Aorta (tissue), 5 donors: ENCODE measurements at regions of chr1 and their contacts with region 1.

Region 1: DNA sequence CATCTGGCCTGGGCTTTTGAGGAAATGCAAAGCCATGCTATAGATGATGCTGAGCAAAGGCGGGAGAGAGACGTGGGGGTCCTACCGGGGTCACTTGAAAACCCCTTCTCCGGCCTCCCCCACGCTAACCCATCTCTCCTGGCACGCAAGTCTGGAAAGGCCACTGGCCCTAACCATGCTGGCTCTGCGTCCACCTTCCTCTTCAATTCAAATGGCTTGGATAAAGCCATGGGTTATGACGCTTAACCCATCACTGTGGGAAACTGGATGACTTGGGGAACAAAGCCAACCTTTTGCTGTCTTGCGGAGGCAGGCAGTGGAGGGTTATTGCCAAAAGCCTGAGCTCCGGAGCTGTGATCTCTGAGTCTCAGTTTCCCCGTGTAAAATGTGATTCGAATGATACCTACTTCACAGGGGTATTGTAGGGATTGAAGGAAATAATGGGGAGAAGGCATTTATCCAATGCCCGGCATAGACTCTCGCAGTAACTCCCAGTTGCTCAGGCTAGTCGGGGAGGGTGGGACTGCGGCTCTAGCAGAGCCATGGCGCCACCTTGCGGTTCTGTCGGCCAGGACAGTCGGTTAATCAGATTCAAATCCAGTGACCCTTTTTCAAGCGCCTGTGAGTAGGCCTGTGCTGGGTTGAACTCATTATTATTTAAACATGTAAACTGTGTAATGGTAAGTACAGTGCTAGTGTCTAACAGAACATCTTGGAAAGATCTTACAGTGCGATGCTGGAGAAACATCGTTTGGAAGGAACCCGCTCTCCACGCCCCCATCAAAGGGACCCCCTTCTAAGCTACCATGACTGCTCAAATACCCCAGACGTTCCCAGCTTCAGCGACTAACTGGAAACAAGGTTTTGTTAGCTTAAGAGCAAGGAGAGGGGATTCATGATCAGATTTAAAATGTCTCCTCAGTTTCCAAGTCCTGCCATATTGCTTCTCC is 20.3 kb downstream of the NEK2 start:
- DNase-seq: peak; percentile 92 to 97
- ATAC-seq: peak; percentile 92
- H3K4me3 ChIP-seq: no peak overlapping the region
- H3K27ac ChIP-seq: no peak overlapping the region
- H3K4me1 ChIP-seq: no peaks in the 10 kb centered on the region
- H3K27me3 ChIP-seq: no peaks in the 10 kb centered on the region

Region 2: DNA sequence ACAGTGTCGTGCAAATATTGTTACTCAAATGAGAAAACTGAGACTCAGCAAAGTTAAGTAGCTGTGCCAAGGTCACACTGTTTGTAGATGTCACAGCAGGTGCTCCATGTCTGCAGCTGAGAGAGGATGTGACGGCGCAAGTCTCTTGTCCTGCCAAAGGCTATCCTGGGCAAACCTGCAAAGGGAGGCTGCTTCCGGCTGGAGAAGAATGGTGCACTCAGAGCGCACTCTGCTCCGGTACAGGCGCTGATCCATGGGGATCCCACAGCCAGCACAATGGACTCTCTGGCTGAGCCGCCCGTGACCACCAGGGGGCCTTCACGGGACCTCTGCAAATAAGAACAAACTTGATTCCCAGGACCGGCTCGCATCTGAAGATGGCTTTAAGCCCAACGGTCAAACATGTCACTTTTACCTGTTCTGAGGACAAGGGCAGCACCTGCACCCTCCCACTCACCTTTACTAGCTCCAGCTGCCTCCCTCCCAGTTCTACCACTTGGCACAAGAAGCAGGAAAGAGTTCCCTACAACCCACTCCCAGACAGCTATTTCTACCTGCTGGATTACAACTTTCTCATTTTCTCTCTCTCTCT is 185.1 kb before region 1 on chr1:
- intact Hi-C with region 1: loop called (anchors 2 to 5 kb)
- DNase-seq: peak; percentile 82 to 93
- ATAC-seq: peak; percentile 81
- H3K4me3 ChIP-seq: no peak overlapping the region
- H3K27ac ChIP-seq: no peak overlapping the region
- H3K4me1 ChIP-seq: no peaks in the 10 kb centered on the region
- H3K27me3 ChIP-seq: no peaks in the 10 kb centered on the region

Region 3: DNA sequence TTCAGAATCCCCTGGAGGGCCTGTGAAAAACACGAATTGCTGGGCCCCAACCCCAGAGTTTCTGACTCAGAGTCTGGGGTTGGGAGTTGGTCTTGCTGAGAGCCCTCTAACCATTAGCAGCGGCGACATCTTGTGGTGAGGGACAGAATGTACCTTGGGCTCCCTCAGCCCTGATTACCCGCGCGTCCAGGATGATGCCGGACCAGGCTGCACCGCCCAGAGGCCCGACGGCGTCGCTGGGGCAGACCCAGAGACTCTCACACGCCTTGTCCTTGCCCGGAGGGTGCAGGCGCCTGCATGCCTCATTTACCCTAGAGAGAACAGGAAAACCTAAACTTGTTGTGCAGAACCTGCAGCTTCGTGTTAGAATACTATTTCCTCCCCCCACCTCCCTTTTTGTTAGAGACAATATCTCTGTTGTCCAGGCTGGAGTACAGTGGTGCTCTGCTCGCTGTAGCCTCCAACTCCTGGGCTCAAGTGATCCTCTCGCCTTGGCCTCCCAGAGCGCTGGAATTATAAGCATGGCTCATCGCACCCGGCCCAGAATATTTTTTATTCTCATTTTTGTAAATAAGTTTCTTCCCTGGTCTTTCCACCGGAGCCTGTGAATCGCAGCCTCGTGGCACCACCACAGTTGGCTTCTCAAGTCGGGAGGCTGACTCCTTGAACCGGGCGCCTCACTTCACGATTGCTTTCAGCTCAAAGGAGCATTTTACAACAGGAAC is 140.9 kb before region 1 on chr1:
- intact Hi-C with region 1: loop called (anchors 1 to 5 kb)
- DNase-seq: peak; percentile 90 to 92
- ATAC-seq: peak; percentile 89
- H3K4me3 ChIP-seq: no peak overlapping the region
- H3K27ac ChIP-seq: no peak overlapping the region
- H3K4me1 ChIP-seq: no peaks in the 10 kb centered on the region
- H3K27me3 ChIP-seq: no peaks in the 10 kb centered on the region

Region 4: DNA sequence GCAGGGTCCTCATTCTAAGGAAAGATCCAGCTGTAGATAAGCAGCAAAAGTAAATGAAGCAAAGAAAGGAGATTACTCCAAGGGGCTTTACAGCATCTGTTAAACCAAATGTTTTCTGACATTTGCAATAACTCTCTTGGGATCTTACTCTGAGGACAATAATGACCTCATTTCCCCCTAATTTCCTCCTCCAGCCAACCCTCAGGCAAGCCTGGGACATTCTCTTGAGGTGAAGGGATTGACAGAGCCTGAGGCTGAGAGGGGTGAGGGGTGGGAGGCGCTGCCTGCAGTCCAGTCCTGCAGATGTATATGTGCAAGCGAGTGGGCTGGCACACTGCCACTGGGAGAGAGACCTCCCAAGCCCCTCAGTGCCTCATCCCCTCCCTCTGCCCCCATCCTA is 60.9 kb after region 1 on chr1:
- intact Hi-C with region 1: no loop called
- DNase-seq: no peak
- ATAC-seq: no peak
- H3K4me3 ChIP-seq: no peak overlapping the region
- H3K27ac ChIP-seq: no peak overlapping the region
- H3K4me1 ChIP-seq: no peaks in the 10 kb centered on the region
- H3K27me3 ChIP-seq: no peaks in the 10 kb centered on the region